GM12878 (cell line): ENCODE measurements at regions of chr5 and their contacts with region 1.

Region 1: GRCh38 chr5:122858454-122858853 is 13.0 kb downstream of the SNX24 start:
- DNase-seq: no peak
- ATAC-seq: no peak
- H3K4me3 ChIP-seq: no peak overlapping the region
- H3K27ac ChIP-seq: no peak overlapping the region
- H3K4me1 ChIP-seq: no peaks in the 10 kb centered on the region
- H3K27me3 ChIP-seq: no peaks in the 10 kb centered on the region
- CTCF ChIP-seq: no peak
- EP300 ChIP-seq: no peak
- POLR2A ChIP-seq: no peak
- RAD21 ChIP-seq: no peak

Region 2: DNA sequence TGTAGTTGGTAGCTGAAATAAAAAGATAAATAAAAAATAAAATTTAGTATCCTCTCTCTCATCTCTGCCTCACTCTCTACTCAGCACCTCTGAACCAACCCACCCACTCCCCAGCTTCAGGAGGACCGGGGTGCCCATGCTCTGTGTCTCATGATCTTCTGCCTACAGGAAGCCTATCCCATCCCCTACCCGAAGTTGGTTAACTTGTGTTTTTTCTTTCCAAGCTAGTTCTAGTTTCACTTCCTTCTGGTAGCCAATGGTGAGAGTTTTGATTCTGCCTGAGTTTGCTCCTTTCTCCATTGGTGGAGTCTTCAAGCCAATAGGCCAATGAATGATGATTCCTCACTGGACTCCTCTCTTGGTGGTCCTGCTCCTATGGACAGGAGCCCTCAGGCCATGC is 19.1 kb after region 1 on chr5:
- CTCF ChIA-PET with region 1: no interaction called
- POLR2A ChIA-PET with region 1: interaction called, 10 read pairs
- RAD21 ChIA-PET with region 1: no interaction called
- SMC1A ChIA-PET with region 1: no interaction called
- in situ Hi-C with region 1: no loop called
- intact Hi-C with region 1: no loop called
- DNase-seq: no peak
- ATAC-seq: peak; percentile 75
- H3K4me3 ChIP-seq: no peak overlapping the region
- H3K27ac ChIP-seq: no peak overlapping the region
- H3K4me1 ChIP-seq: peaks cover 5% of the 10 kb centered on the region; the same call in 1 of the 2 replicates
- H3K27me3 ChIP-seq: no peaks in the 10 kb centered on the region
- CTCF ChIP-seq: no peak
- EP300 ChIP-seq: no peak
- POLR2A ChIP-seq: no peak
- RAD21 ChIP-seq: no peak

Region 3: GRCh38 chr5:123046222-123046621 is 187.8 kb after region 1 on chr5:
- CTCF ChIA-PET with region 1: no interaction called
- POLR2A ChIA-PET with region 1: no interaction called
- RAD21 ChIA-PET with region 1: no interaction called
- SMC1A ChIA-PET with region 1: no interaction called
- in situ Hi-C with region 1: no loop called
- intact Hi-C with region 1: no loop called
- DNase-seq: no peak
- ATAC-seq: no peak
- H3K4me3 ChIP-seq: no peak overlapping the region
- H3K27ac ChIP-seq: no peak overlapping the region
- H3K4me1 ChIP-seq: no peaks in the 10 kb centered on the region
- H3K27me3 ChIP-seq: no peaks in the 10 kb centered on the region; a peak in 1 of 4 replicates
- CTCF ChIP-seq: no peak
- EP300 ChIP-seq: no peak
- POLR2A ChIP-seq: no peak
- RAD21 ChIP-seq: no peak